IMR-90 (cell line): ENCODE measurements at regions of chr10 and their contacts with region 1.

Region 1: DNA sequence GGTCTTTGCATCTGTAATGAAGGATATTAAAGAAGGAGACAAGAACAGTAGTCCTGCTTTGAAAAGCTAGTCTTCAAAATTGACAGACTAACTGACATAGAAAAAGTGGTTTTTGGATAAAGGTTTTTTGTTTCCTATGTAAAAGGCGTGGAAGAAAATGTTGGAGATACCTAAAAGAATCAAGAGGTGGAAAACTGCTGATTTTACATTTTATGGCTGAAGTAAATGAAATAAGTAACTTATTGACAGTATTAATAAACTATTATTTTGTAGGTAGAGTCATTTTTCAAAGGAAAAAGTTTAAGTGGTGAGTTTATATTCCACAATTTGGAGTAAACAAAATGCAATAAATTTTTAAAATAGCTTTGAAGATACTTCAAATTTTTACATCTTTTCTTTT is 12.6 kb upstream of the HELLS start:
- DNase-seq: no peak
- ATAC-seq: no peak
- H3K4me3 ChIP-seq: no peak overlapping the region
- H3K27ac ChIP-seq: no peak overlapping the region
- H3K4me1 ChIP-seq: no peaks in the 10 kb centered on the region
- H3K27me3 ChIP-seq: no peaks in the 10 kb centered on the region
- CTCF ChIP-seq: no peak
- POLR2A ChIP-seq: no peak
- RAD21 ChIP-seq: no peak

Region 2: DNA sequence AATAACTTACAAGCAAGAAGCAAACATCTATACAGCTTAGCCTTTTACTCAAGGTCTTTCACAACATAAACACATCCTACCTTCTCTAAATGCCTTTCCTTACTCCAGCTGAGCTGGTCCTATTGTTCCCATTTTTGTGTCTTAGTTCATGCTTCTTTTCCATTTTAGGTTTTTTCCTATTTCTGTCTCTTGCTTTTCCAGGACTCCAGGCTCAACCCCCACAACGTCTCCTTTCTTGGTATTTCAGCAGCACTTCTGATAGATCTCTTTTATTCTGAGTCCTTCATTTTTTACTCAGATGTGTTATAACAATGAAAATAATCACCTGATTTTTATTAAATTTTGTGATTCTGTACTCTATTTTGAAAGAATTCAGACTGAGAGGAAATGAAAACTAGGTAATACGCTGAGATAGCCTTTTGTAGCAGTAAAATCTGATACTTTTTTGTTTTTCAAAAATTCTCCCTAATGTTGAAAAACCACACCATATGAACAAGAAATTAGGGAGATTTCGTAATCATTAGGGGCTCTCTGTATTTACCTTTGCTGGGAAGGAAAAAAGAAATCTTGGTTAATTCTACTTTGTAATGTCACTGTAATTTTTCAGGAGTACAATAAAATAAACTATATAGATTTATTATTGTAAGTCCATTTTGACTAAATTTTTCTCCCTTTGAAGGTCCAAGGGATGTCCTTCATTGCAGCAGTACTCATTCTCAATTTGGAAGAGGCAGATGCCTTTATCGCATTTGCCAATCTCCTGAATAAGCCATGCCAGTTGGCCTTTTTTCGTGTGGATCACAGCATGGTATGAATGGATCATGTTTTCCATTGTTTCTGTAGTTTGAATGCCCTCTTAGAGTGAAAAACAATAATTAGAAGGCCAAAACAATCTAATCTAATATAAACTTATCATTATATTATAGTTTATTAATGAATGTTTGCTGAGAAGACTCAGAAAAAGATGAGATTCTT is 11.5 kb before region 1 on chr10:
- CTCF ChIA-PET with region 1: interaction called, 11 read pairs
- POLR2A ChIA-PET with region 1: no interaction called
- dilution Hi-C with region 1: no loop called
- in situ Hi-C with region 1: no loop called
- intact Hi-C with region 1: no loop called
- DNase-seq: no peak
- ATAC-seq: no peak
- H3K4me3 ChIP-seq: no peak overlapping the region
- H3K27ac ChIP-seq: no peak overlapping the region
- H3K4me1 ChIP-seq: no peaks in the 10 kb centered on the region
- H3K27me3 ChIP-seq: no peaks in the 10 kb centered on the region
- CTCF ChIP-seq: no peak
- POLR2A ChIP-seq: no peak
- RAD21 ChIP-seq: no peak

Region 3: DNA sequence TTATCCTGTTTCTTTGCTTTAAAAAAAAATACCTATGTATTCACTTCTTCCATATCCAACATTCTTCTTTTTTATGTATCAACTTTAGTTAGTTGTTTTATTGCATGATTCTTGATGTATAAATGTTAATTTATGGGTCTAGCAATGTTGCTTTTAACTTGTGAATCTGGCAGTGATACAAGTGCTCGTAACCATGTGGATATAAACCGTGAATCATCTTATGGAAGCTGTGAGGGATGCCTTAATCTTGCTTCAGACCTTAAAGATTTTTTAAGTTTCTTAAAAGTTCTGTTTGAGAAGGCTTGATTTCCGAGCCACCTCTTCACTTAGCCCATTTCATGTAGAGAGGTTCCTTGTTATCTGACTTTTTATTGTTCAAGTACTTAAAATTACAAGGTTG is 38.5 kb after region 1 on chr10:
- CTCF ChIA-PET with region 1: no interaction called
- POLR2A ChIA-PET with region 1: no interaction called
- dilution Hi-C with region 1: no loop called
- in situ Hi-C with region 1: no loop called
- intact Hi-C with region 1: no loop called
- DNase-seq: peak; percentile 58
- ATAC-seq: no peak
- H3K4me3 ChIP-seq: no peak overlapping the region
- H3K27ac ChIP-seq: no peak overlapping the region
- H3K4me1 ChIP-seq: no peaks in the 10 kb centered on the region
- H3K27me3 ChIP-seq: no peaks in the 10 kb centered on the region
- CTCF ChIP-seq: no peak
- POLR2A ChIP-seq: no peak
- RAD21 ChIP-seq: no peak